Activated T-helper 2 cell treated with anti-CD3 and anti-CD28 coated beads, Interferon-gamma antibody, Interleukin-2, Interleukin-4, amounts not matched to agents 10 μg/mL and 5 μg/mL and 100 μg/mL, durations not matched to agents 14 hours and 24 hours and 36 hours (primary cell): ENCODE measurements at regions of chr21 and their contacts with region 1.

Region 1: DNA sequence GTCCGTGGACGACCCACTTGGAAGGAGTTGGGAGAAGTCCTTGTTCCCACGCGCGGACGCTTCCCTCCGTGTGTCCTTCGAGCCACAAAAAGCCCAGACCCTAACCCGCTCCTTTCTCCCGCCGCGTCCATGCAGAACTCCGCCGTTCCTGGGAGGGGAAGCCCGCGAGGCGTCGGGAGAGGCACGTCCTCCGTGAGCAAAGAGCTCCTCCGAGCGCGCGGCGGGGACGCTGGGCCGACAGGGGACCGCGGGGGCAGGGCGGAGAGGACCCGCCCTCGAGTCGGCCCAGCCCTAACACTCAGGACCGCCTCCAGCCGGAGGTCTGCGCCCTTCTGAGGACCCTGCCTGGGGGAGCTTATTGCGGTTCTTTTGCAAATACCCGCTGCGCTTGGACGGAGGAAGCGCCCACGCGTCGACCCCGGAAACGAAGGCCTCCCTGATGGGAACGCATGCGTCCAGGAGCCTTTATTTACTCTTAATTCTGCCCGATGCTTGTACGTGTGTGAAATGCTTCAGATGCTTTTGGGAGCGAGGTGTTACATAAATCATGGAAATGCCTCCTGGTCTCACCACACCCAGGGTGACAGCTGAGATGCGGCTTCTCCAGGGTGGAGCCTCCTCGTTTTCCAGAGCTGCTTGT is 32.4 kb downstream of the PRMT2 start:
- DNase-seq: no peak
- H3K4me3 Mint-ChIP-seq: peak overlapping the region; percentile 79
- H3K27ac Mint-ChIP-seq: no peak overlapping the region
- H3K4me1 Mint-ChIP-seq: peaks cover 8% of the 10 kb centered on the region
- H3K27me3 Mint-ChIP-seq: peaks cover 14% of the 10 kb centered on the region

Region 2: DNA sequence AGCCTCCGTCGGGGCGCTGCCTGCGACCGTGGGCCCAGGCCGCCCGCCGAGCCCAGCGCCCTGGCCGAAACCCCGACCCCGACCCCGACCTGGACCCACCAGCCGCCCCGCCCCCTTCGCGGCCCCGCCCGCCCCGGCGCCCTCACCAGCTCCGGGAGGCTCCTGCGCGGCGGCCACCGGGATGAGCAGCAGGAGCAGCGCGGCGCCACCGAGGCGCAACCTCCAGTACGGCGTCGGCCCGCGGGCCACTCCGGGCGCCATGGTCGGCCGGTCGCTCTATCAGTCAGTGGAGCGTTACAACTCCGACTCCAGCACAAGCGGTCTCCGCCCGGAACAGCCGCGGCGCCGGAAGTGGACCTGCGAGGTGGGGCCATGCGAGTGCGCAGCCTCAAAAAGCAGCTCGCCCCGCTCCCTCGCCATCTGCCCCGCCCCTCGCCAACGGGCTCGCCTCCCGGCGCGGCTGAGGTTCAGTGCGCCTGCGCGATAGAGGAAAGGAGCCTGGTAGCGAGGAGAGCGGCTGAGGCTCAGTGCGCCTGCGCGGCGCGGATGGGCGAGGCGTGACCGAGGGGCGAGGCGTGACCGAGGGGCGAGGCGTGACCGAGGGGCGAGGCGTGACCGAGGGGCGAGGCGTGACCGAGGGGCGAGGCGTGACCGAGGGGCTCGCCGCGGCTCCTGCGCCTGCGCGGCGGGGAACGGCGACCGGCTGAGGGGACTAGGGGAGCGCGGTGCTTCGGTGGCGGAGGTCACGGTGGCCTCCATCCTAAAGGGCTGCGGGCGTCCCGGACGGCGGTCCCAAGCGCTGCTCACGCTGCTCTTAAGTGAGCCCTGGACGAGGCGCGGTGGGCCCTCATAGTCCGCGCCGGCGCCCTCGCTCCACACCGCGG is 1794.3 kb before region 1 on chr21 and contains the start of gene PTTG1IP:
- intact Hi-C with region 1: no loop called
- DNase-seq: peak; percentile 100
- H3K4me3 Mint-ChIP-seq: peak within 1 kb of the TSS; percentile 87
- H3K27ac Mint-ChIP-seq: peak within 1 kb of the TSS; percentile 89
- H3K4me1 Mint-ChIP-seq: peaks cover 48% of the 10 kb centered on the region
- H3K27me3 Mint-ChIP-seq: no peaks in the 10 kb centered on the region
- total RNA-seq, gene PTTG1IP: 48.1 and 48.3 TPM in 2 replicates

Region 3: GRCh38 chr21:46635324-46636172 is 32.3 kb before region 1 on chr21 and contains the start of gene PRMT2:
- intact Hi-C with region 1: loop called (anchors 2 kb)
- DNase-seq: peak; percentile 98
- H3K4me3 Mint-ChIP-seq: peak within 1 kb of the TSS; percentile 93
- H3K27ac Mint-ChIP-seq: peak within 1 kb of the TSS; percentile 97
- H3K4me1 Mint-ChIP-seq: peaks cover 57% of the 10 kb centered on the region
- H3K27me3 Mint-ChIP-seq: peaks cover 7% of the 10 kb centered on the region
- total RNA-seq, gene PRMT2: 71.0 and 73.9 TPM in 2 replicates